Sciatic nerve (tissue), 2 donors: ENCODE measurements at regions of chr14 and their contacts with region 1.

Region 1: DNA sequence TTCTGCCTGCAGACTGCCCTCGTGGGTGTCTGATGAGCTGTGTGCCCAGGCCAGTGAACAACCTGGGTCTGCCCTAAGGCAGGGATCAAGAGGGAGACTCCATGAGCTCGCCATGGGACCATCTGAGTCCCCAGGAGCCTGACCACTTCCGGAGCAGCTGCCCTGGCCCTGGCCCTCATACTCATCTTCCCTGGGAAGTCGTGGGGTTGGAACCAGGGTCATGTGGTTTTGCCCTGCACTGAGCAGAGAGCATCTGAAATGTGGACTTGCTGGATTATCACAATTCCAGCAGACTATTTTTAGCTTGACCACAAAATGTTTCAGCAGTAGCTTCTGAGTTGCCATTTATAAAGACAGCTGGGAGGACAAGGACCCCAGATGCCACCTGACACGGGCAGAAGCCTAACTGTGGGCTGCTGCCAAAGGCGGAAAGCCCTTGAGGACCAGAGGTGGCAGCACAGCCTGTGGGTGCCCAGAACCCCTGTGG is 6.7 kb downstream of the BTBD6 start:
- DNase-seq: no peak
- ATAC-seq: no peak

Region 2: GRCh38 chr14:105330491-105330895 is 75.4 kb after region 1 on chr14:
- intact Hi-C with region 1: loop called (anchors 10 kb)
- DNase-seq: no peak
- ATAC-seq: no peak

Region 3: DNA sequence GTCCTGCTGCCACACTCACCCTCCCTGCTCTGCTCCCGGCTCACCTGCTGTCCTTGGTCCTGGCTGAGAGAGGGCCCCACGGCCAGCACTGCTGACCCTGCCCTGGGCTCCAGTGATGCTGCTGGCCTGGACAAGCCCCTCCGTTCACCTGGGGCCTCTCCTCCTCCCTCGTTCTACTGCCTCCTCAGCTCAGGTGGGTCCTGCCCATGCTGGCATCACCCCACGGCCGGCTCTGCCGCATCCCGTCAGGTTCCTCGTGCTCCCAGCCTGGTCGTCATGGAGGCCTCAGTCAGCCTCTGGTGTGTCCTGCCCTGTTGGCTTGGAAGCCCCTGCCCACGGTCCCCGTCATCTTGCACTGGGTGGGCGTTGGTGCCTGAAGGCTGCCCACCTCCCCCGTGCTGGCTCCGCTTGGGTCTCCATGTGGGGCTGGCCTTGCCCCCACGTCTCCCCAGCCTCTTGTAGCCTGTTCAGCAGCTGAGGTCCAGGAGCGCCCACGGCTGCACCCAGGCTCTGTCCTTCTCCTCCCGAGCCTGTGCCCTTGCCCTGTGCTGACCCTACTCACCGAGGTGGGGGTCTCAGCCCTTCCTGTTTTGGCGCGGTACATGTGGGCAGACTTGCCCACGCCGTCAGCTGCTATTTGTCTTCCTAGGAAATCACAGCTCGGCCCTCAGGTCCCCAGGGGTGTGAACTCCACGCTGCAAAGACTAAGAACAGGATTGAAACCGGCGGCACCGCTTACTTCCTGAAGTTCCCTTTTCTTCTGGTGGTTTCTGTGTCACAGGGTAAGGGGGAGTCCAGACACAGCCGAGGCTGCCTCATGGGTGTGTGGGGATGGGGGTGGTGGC is 392.9 kb after region 1 on chr14:
- intact Hi-C with region 1: no loop called
- DNase-seq: no peak
- ATAC-seq: peak; percentile 17